ENCODE measurements at regions of chr5 and their contacts with region 1.

Region 1: GRCh38 chr5:143435210-143435657 is 31.7 kb upstream of the NR3C1 start:
- DNase-seq: peak; percentile 47
- ATAC-seq: peak; percentile 39
- H3K4me3 Mint-ChIP-seq: peak overlapping the region; percentile 76
- H3K27ac Mint-ChIP-seq: peak overlapping the region; percentile 98
- H3K4me1 Mint-ChIP-seq: peaks cover 69% of the 10 kb centered on the region
- H3K27me3 Mint-ChIP-seq: no peaks in the 10 kb centered on the region

Region 2: GRCh38 chr5:143002459-143003328 is 432.5 kb before region 1 on chr5:
- CTCF ChIA-PET with region 1: interaction called, 6 read pairs
- POLR2A ChIA-PET with region 1: no interaction called
- intact Hi-C with region 1: loop called in 1 of 2 experiments (anchors 1 kb)
- DNase-seq: peak; percentile 78
- ATAC-seq: peak; percentile 92
- H3K4me3 Mint-ChIP-seq: peak overlapping the region; percentile 17
- H3K27ac Mint-ChIP-seq: peak overlapping the region; percentile 93
- H3K4me1 Mint-ChIP-seq: peaks cover 50% of the 10 kb centered on the region
- H3K27me3 Mint-ChIP-seq: no peaks in the 10 kb centered on the region

Region 3: DNA sequence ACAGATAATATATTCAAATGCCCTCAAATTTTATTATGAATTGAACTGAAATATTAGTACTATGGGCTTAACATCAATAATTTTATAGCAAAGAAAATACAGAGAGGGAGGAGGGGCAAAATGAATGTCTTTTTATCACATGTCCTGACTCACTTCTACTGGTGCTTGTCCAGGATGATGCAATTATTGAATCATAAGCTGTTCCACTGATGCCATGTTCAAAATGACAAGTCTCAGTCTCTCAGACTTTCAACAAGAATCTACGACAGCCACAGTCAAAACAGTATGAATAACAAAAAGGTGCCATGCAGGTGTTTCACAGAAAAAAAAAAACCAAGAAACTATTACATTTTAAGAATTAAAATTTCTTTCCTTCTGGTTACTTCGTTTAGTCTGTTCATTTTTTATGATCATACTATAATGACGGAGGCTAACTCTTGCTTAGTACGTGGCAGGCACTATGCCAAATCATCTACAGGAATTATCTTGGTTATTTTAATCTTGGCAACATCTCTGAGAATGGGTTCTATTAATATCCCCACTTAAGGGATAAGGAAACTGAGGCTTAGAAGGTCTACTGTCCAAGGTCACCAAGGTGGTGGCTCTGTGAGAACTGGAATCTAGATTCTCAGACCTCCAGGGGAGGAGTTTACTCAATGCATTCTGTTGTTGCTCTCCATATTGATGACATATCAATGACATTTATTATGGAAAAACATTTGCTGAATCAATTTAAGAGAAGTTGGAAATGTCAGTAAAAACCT is 93.2 kb before region 1 on chr5:
- CTCF ChIA-PET with region 1: no interaction called
- POLR2A ChIA-PET with region 1: no interaction called
- intact Hi-C with region 1: loop called in 1 of 2 experiments (anchors 5 kb)
- DNase-seq: no peak
- ATAC-seq: peak; percentile 89
- H3K4me3 Mint-ChIP-seq: no peak overlapping the region
- H3K27ac Mint-ChIP-seq: peak overlapping the region; percentile 85
- H3K4me1 Mint-ChIP-seq: peaks cover 51% of the 10 kb centered on the region
- H3K27me3 Mint-ChIP-seq: no peaks in the 10 kb centered on the region

Region 4: GRCh38 chr5:143506881-143507551 is 71.8 kb after region 1 on chr5:
- CTCF ChIA-PET with region 1: no interaction called
- POLR2A ChIA-PET with region 1: no interaction called
- intact Hi-C with region 1: no loop called
- DNase-seq: no peak
- ATAC-seq: no peak
- H3K4me3 Mint-ChIP-seq: no peak overlapping the region
- H3K27ac Mint-ChIP-seq: no peak overlapping the region
- H3K4me1 Mint-ChIP-seq: no peaks in the 10 kb centered on the region
- H3K27me3 Mint-ChIP-seq: no peaks in the 10 kb centered on the region

Region 5: DNA sequence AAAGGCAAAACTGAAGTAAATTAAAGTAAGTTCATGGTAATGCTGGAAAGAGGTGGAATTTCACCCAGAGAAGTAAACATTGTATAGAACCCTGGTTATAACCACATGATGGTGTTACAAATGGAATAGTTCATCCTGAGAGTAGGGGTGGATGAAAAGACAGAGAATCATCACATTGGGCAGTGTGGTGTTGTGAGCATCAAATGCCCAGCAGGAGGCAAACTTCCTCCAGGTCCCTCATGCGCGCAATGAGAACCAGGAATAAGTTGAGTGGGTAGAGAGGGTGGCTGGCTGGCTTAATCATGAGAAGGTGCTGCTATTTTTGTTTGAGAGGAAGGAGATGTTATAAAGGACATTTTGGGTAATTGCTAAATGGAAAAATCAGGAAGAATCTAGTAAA is 213.5 kb after region 1 on chr5:
- CTCF ChIA-PET with region 1: no interaction called
- POLR2A ChIA-PET with region 1: no interaction called
- intact Hi-C with region 1: loop called in 1 of 2 experiments (anchors 2 kb)
- DNase-seq: peak; percentile 26
- ATAC-seq: no peak
- H3K4me3 Mint-ChIP-seq: no peak overlapping the region
- H3K27ac Mint-ChIP-seq: no peak overlapping the region
- H3K4me1 Mint-ChIP-seq: peaks cover 17% of the 10 kb centered on the region
- H3K27me3 Mint-ChIP-seq: no peaks in the 10 kb centered on the region

Region 6: DNA sequence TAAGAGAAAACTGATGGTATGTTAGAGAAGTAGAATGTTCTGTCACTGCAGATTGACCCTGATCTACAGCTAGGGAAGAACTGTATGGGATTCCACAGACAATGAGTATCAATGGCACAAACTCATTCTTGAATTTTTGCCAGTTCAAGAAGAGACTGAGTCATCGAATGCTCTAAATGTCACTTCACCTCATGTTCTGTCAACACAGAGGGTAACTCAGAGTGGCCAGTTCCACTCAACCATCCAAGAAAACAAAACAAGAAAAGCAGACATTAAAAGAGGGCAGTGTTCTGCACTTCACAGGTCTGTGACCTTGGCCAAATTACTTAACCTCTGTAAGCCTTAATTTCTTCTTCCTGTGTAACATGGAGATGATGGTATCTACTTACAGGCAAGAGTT is 244.5 kb after region 1 on chr5:
- CTCF ChIA-PET with region 1: no interaction called
- POLR2A ChIA-PET with region 1: no interaction called
- intact Hi-C with region 1: loop called in 1 of 2 experiments (anchors 1 kb)
- DNase-seq: no peak
- ATAC-seq: peak; percentile 71
- H3K4me3 Mint-ChIP-seq: no peak overlapping the region
- H3K27ac Mint-ChIP-seq: no peak overlapping the region
- H3K4me1 Mint-ChIP-seq: peaks cover 26% of the 10 kb centered on the region
- H3K27me3 Mint-ChIP-seq: peaks cover 2% of the 10 kb centered on the region

Measured in activated CD4-positive, alpha-beta T cell treated with anti-CD3 and anti-CD28 coated beads for 36 hours (primary cell).